Motor neuron (in vitro differentiated cells): ENCODE measurements at regions of chr16 and their contacts with region 1.

Region 1: DNA sequence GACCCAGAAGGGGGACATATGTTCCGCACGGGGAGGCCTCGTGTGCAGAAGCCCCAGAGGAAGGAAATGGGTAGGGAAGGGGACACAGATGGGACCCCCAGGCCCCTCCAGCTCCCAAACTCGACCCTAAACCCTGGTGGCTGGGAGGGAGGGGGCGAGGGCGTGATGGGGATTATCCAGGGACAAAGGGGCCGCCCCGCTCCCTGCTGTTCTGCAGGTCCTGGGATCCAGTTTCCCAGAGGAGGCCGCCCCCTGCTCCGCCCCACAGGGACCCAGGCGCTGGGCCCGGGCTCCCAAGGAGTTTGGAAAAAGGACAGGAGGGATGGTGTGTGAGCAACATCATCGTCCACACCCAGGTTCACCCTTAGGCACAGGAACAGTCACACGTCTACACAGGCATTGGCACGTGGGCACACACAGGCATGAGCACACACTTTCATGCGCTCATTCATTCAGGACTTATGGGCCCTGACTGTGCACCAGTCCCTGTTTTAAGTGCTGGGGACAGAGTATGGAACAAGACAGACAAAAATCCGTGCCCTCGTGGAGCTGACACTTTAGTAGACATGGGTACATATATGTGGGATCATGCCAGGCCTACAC is 12.8 kb upstream of the FBXL19 start:
- ATAC-seq: no peak
- H3K4me3 ChIP-seq: no peak overlapping the region
- H3K27ac ChIP-seq: no peak overlapping the region
- H3K4me1 ChIP-seq: no peaks in the 10 kb centered on the region

Region 2: DNA sequence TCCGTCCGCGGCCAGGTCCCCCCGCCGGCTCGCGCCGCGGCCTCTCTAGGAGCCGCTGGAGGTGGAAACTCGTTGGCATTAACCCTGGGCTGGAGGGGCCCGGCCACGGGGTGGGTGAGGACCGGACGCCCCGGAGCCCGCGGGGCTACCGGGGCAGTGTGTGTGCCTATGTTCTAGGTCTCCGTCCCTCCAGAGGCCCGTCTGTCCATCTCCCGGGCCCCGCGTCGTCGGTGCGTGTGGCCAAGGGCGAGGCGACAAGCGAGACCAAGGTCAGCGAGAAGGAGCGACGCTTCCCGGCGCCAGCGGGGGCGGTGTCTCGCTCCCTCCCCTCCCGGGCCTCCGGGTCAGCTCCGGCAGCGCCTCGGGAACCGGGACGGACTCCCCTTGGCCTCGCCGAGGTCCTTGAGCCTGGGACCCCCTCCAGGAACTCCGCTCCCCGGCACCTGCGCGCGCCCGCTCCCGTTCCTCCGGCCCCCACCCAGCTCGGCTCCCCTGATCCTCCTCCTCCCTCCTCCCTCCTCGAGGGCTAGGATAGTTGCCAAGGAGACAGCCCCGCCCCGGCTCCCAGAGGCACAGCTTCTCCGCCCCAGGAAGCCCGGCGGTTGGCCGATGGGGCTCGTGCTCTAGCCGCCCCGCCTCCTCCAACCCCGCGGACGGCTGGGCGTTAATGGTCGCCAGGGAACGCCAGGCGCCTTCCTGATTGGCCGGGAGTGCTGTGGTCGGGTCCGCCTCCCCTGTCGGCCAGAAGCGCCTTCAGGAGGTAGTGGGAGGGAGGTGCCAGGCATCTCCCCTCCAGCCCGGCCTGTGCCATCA is 383.5 kb before region 1 on chr16:
- in situ Hi-C with region 1: no loop called
- ATAC-seq: peak; percentile 84 to 92 (median 88)
- H3K4me3 ChIP-seq: peak overlapping the region; percentile 63 to 96 (median 84)
- H3K27ac ChIP-seq: peak overlapping the region; percentile 96 to 99
- H3K4me1 ChIP-seq: peaks cover 6% of the 10 kb centered on the region in 2 donors

Region 3: GRCh38 chr16:30844671-30845449 is 65.7 kb before region 1 on chr16:
- in situ Hi-C with region 1: loop called in 2 of 9 experiments (anchors 5 to 10 kb)
- ATAC-seq: peak in 7 of 8 experiments; percentile 18 to 97 (median 43)
- H3K4me3 ChIP-seq: no peak overlapping the region
- H3K27ac ChIP-seq: no peak overlapping the region
- H3K4me1 ChIP-seq: no peaks in the 10 kb centered on the region

Region 4: DNA sequence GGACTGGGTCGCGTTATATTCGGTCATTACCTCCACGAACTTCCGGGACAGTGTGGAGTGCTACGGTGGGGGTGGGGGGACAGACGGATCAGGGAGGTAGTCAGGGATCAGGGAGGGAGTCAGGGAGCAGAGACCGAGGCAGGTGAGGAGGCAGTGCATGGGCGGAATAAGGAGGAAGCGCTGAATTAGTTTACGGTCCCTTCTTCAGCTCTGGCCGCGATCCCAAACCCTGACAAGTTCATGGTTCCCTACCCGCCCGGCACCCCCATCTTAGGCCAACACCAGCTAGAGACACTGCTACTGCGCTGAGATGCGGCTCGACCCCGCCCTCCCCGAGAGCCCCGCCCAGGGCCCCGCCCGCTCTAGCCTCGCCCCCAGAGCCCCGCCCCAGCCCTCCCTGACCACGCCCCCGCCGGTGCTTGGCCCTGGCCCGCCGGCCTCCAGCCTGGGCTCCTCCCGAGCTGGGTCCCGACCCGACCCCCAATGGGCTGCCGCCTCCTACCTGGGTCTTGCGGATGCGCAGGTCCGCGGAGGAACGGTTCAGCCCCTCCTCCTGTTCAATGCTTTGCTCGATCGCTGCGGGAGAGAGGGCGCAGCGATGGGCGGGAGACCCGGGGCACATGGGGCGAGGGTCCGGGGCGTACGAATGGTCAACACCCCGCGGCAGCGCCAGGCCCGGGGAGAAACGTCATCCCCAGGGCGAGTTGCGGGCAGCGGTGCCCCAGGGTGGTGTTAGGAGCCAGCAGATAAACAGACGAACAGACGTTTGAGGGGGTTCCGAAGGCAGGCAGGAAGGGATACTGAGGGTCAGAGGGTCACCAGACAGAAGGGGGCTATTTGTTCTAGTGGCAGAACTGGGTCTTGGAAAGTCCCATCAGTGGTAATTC is 86.7 kb after region 1 on chr16:
- in situ Hi-C with region 1: no loop called
- ATAC-seq: peak; percentile 69 to 88 (median 82)
- H3K4me3 ChIP-seq: peak overlapping the region in 4 of 5 donors; percentile 10 to 28 (median 18)
- H3K27ac ChIP-seq: no peak overlapping the region
- H3K4me1 ChIP-seq: peaks cover 8% of the 10 kb centered on the region in 2 donors